ENCODE measurements at regions of chr11 and their contacts with region 1.

Region 1: DNA sequence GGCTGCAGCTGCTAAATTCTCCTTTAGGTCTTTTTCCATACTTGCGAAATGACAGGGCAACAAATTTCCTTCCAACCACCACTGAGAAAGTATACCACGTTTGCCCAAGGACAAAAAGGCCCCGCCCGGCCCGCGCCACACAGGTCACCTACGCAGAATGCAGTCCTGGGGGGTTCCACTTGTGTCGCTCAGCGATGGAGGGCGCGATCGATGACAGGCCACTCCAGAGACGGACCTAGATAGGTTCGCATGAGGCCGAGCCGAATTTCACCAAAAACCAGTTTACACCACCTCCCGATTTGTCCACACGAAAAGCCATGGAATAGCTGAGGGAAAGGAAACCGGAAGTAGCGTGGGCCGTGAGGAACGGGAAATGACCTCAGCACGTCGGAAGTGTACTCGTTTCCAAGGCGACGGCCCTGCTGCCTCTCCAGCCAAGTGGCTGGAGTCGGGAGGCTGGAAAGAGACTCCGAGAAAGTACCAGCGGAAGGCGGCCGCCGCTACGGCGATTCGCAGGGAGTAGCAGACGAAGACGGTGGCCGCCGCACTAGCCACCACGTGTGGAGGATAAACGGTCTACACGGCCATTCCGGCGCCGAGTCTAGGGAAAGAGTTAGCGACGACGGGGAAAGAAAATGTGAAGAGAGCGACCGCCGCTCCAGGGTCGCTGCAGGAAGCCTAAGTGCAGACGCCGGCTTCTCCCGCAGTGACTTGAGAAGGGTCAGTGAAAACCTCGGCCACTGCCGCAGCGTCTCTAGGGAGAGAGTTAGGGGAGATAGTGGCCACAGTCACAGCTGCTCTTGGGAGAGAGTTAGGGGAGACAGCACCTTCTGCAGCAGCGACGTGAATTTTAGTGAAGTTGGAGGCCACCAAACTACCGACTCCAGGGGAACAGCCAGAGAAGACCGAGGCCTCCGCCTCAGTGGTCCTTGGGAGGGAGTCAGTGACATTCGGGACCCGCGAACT is at the start of gene ANKRD42:
- DNase-seq: peak; percentile 83
- H3K4me3 Mint-ChIP-seq: peak within 1 kb of the TSS; percentile 93
- H3K27ac Mint-ChIP-seq: peak within 1 kb of the TSS; percentile 94
- H3K4me1 Mint-ChIP-seq: peaks cover 40% of the 10 kb centered on the region
- H3K27me3 Mint-ChIP-seq: no peaks in the 10 kb centered on the region
- total RNA-seq, gene ANKRD42: 3.3 and 3.5 TPM in 2 replicates

Region 2: DNA sequence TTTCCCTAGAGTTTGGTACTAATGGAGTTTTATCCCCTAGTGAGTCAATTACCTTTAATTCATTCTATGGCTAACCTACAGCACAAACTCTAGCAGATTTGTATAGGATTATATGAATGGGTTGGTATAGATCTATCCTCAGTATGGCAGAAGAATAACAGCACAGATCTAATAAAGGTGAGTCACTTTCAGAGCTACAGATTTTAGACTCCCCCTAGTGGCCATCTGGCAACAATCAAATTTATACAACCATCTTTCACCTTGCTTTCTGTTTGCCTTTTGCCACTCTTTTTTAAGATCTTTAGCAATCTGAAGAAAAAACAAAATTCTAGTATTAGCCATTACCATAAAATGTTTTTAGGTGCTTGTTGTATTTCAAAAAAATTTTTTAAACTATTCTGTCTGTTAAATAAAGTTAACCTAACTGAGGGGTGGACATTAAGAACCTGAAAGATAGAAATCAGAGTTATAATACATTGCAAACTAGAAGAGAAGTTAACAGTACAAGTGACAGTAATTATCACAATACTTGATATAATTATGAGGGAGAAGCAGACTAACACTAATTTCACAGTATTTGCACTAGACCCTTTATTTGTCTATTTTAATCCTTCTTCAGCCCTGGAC is 266.2 kb before region 1 on chr11:
- intact Hi-C with region 1: loop called (anchors 5 kb)
- DNase-seq: no peak
- H3K4me3 Mint-ChIP-seq: no peak overlapping the region
- H3K27ac Mint-ChIP-seq: no peak overlapping the region
- H3K4me1 Mint-ChIP-seq: peaks cover 19% of the 10 kb centered on the region
- H3K27me3 Mint-ChIP-seq: no peaks in the 10 kb centered on the region

Region 3: GRCh38 chr11:83071567-83072349 is 121.8 kb before region 1 on chr11 and contains the start of gene RAB30:
- intact Hi-C with region 1: loop called (anchors 1 kb)
- DNase-seq: peak; percentile 93
- H3K4me3 Mint-ChIP-seq: no peak within 1 kb of the TSS
- H3K27ac Mint-ChIP-seq: no peak within 1 kb of the TSS
- H3K4me1 Mint-ChIP-seq: peaks cover 26% of the 10 kb centered on the region
- H3K27me3 Mint-ChIP-seq: no peaks in the 10 kb centered on the region
- total RNA-seq, gene RAB30: 15.2 and 16.0 TPM in 2 replicates

Region 4: DNA sequence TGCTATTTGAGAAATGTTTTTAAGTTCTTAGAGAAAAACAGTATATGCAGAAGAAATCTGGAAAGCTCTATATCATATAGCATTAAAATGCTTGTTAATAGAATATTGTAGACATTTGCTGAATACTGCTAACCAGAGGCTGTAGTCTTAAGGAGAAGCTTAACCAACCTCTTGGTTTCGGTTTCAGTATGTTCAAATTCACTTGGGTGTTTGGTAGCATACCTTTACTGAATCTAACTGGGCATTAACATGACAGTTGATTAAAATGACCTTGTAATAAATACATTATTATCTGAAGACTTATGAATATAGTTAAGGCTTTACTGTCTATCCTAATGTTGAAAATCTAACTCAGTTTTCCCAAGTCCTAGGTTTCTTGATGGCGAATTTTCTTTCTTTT is 31.2 kb before region 1 on chr11:
- intact Hi-C with region 1: loop called (anchors 1 kb)
- DNase-seq: no peak
- H3K4me3 Mint-ChIP-seq: peak overlapping the region; percentile 50
- H3K27ac Mint-ChIP-seq: no peak overlapping the region
- H3K4me1 Mint-ChIP-seq: peaks cover 55% of the 10 kb centered on the region
- H3K27me3 Mint-ChIP-seq: no peaks in the 10 kb centered on the region

Region 5: DNA sequence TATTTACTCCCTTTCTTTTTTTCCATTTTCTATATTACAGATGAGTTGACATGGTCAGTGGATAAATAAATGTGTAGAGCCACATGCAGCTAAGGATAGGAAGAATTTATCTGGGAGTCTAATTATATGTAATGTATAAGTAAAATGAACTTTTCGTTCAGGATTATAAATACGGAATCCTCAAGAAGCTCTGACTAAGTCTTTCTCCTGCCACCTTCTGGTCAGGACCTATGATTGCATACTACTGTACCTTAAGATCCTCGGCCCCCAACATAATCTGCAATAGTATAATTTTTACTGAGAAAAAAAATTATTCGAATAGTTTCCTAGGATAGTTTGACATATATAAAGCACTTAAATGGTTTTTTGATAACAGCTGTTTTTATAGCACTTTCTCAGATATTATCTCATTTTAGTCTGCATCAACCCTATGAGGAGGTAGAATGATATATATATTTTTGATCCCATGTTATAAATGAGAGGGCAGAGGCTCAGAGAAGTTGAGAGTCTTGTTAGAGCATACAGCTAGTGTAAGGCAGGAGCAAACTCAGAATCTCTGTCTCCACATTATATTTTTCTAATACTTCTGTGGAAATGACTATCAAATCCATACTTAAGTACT is 56.5 kb after region 1 on chr11:
- intact Hi-C with region 1: loop called (anchors 2 kb)
- DNase-seq: no peak
- H3K4me3 Mint-ChIP-seq: no peak overlapping the region
- H3K27ac Mint-ChIP-seq: no peak overlapping the region
- H3K4me1 Mint-ChIP-seq: peaks cover 4% of the 10 kb centered on the region
- H3K27me3 Mint-ChIP-seq: peaks cover 5% of the 10 kb centered on the region